ENCODE measurements at regions of chr22 and their contacts with region 1.

Region 1: DNA sequence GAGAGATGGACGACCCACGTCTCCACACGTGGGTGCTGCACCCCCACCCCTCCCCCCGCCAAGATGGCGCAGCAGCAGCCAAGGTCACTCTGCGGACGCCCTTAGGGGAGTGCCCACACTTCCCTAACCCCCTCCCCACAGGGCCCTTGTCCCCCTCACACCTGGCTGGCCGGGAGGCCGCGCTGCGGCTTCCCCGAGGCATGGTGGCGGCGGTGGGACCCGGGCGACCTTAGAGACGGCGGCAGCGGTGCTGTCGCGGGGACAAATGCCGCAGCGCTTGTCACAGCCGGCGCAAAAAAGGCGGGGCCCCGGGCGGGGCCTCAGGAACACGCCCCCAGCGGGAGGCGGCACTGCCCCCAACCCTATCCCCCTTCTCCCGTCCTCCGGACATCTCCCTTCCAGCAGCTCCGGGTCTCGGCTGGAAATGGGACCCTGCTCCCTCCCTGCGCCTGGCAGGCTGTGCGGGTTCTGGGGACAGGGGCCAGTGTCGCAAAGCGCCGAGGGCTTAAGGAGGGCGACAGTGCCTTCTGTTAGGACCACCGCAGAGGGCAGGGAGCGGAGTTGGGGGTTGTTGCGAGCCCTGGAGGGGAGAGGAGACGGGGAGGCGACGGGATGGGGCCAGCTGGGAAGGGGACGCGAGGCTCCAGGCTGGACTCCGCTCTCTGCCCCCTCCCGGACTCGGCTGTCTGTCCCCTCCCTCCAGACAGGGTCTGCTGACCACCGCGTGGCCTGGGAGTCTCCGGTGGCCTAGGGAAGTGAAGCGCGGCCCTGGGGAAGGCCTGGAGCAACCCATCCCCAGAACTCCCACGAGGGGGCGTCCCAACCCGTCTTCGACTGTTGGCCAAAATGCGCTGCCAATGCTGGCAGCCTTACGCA is at the start of gene CHCHD10:
- DNase-seq: no peak
- H3K4me3 ChIP-seq: peak within 1 kb of the TSS; percentile 61
- H3K27me3 ChIP-seq: no peaks in the 10 kb centered on the region
- CTCF ChIP-seq: peak; percentile 86
- polyA plus RNA-seq, gene CHCHD10: 22.1 and 22.5 TPM in 2 replicates

Region 2: GRCh38 chr22:23709107-23709506 is 58.8 kb before region 1 on chr22:
- CTCF ChIA-PET with region 1: no interaction called
- POLR2A ChIA-PET with region 1: no interaction called
- DNase-seq: peak; percentile 31
- H3K4me3 ChIP-seq: no peak overlapping the region
- H3K27me3 ChIP-seq: no peaks in the 10 kb centered on the region
- CTCF ChIP-seq: no peak

Region 3: GRCh38 chr22:23857606-23858483 is 89.9 kb after region 1 on chr22 and contains the start of gene SLC2A11:
- CTCF ChIA-PET with region 1: interaction called, 272 read pairs
- POLR2A ChIA-PET with region 1: no interaction called
- DNase-seq: peak; percentile 86
- H3K4me3 ChIP-seq: peak within 1 kb of the TSS; percentile 59
- H3K27me3 ChIP-seq: no peaks in the 10 kb centered on the region
- CTCF ChIP-seq: peak; percentile 51
- polyA plus RNA-seq, gene SLC2A11: 9.6 and 14.7 TPM in 2 replicates

Region 4: DNA sequence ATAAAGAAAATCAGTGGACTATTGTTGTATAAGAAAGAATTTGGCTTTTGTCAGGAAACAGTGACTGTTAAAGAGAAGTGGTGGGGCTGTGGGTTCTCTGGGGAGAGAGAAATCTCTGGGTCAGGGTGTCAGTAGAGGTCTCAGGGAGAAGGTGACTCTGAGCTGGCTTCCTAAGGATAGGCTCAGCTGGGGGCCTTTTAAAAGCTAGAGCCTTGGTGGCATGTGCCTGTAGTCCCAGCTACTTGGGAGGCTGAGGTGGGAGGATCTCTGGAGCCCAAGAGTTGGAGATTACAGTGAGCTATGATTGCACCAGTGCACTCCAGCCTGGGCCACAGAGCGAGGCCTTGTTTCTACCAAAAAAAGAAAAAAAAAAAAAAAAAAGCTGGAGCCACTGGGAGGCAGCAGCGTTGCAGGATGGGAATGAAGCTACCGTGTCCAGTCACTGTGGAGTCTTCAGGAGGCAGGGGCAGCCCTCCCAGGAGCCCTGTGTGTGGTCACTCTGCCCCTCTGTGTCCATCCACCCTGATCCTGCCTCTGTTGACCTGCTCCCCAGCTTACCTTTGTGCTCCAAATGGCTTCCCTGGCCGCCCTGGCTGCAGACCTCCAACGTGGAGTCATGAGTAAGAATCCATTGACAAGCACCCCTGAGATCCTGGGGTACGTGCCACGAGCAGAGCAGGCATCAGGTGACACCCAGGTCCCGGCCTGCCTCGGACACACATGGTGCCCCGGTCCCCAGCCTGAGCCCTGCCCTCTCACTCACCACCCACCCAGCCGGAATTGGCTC is 120.9 kb after region 1 on chr22:
- CTCF ChIA-PET with region 1: no interaction called
- POLR2A ChIA-PET with region 1: interaction called, 20 read pairs
- DNase-seq: no peak
- H3K4me3 ChIP-seq: no peak overlapping the region
- H3K27me3 ChIP-seq: no peaks in the 10 kb centered on the region
- CTCF ChIP-seq: peak; percentile 19; the same call in 1 of the 2 replicates

Measured in BJ (cell line).